ENCODE measurements at regions of chr2 and their contacts with region 1.

Region 1: DNA sequence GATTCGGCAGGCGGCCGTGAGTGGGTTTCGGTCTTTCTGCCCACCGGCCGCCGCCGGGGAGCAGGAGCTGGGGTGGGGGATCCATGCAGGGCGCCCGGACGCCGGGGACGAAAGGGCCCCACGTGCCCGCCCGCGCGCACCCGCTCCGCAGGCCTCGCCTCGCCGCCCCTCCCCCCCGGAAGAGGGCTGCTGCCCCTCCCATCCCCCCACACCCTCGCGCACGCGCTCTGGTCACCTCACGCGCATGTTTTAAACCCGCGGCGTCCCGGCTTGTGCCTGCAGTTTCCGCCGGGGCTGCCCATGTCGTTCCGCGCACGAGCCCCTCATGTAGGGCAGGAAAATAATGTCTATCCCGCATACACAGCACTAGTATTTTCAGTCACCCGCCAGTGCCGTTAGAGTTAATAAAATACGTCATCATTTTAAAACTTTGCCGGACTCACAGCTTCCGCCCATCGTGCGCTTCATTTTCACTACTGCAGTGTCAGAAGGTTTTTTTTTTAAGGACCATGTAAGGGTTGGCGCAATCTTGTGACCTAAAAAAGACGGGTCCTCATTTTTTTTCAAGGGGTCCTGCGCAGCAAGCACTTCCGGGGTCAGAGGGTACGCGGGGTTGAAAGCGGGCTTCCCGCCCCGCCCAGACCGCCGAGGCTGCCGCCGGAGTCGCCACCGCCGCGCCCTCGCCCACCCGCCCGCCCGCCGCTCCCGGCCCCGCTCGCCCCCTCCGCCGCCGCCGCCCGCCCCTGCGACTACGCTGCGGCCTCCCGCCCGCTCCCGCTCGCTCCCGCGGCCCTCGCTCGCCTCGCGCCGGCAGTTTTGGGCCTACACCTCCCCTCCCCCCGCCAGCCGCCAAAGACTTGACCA is at the start of gene PCBP1:
- DNase-seq: peak; percentile 95 to 97 (median 96)
- H3K4me3 ChIP-seq: peak within 1 kb of the TSS; percentile 69 to 99 (median 93)
- H3K27ac ChIP-seq: peak within 1 kb of the TSS; percentile 100
- H3K4me1 ChIP-seq: peaks cover 35 to 70% (median 50%) of the 10 kb centered on the region in 4 experiments
- H3K27me3 ChIP-seq: no peaks in the 10 kb centered on the region

Region 2: DNA sequence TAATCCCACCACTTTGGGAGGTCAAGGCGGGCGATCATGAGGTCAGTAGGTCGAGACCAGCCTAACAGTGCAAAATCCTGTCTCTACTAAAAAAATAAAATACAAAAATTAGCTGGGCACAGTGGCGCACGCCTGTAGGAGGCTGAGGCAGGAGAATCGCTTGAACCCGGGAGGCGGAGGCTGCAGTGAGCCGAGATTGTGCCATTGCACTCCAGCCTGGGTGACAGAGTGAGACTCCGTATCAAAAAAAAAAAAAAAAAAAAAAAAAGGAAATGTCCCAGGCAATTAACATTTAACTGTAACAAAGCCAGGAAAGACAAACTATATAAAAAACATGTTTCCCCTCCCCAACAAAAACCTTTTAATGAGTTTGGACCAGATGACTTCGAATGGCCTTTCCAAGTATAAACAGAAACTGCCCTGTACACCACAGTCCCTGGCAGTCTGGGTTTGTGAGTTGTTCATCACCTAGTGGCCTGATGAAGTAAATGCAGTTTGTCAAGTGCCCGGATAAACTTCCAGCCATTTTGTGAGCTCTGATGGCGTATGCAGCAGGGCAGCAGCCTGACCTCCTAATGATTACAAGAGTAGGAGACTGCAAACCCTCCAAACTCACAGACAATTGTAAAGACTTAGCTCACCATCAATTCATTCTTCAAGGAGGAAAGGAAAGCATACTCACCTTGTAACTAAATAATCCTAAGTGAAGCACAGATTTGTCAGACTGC is 16.4 kb before region 1 on chr2:
- CTCF ChIA-PET with region 1: interaction called, 13 read pairs
- POLR2A ChIA-PET with region 1: no interaction called
- DNase-seq: peak; percentile 88 to 92 (median 92)
- H3K4me3 ChIP-seq: peak overlapping the region in 1 of 7 experiments; percentile 33
- H3K27ac ChIP-seq: no peak overlapping the region
- H3K4me1 ChIP-seq: peaks cover 4 to 19% (median 10%) of the 10 kb centered on the region in 4 experiments
- H3K27me3 ChIP-seq: no peaks in the 10 kb centered on the region

Region 3: GRCh38 chr2:70124983-70125480 is 38.0 kb after region 1 on chr2:
- CTCF ChIA-PET with region 1: interaction called, 19 read pairs
- POLR2A ChIA-PET with region 1: interaction called, 7 read pairs
- DNase-seq: peak; percentile 69 to 84 (median 80)
- H3K4me3 ChIP-seq: peak overlapping the region; percentile 30 to 83 (median 70)
- H3K27ac ChIP-seq: peak overlapping the region; percentile 85 to 92
- H3K4me1 ChIP-seq: peaks cover 29 to 80% (median 59%) of the 10 kb centered on the region in 4 experiments
- H3K27me3 ChIP-seq: no peaks in the 10 kb centered on the region

Region 4: DNA sequence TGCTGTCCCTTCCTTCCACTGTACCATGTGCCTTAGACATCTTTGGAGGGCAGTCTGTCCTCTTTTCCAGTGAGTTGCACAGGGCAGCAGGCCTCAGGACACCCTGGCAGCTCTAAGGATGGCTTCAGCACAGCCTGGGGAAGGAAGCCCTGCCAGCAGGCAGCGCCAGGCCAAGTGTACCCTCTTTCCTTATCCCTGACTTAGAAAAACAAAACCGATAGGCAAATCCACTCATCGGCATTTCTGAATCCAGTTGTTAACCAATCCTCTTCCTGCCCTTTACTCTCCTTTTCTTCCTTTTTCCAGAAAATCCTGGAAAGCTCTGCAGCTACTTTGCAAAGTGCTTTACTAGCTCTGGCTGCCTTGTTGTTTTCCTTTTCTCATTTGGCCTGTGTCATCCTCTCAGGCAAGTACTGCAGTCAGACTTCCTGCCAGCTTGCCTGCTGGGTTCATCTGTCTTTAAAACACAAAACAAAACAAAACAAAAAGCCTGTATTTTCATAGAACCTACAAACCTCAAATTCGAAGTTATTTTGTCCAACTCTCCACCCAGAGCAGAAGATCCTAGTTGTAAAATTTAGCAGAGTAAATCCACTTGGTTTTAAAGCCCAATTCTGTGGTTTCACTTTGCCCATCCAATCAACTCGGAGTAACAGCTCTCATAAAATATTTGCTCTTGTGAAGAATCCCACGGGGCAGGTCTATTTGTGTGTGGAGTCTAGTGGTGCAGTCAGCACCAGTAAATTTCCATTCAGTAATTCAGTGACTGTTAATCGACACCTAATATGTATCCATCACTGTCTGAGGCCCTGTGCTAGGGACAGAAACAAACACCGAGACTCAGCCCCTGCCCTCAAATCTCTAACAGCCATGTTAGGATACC is 45.4 kb after region 1 on chr2:
- CTCF ChIA-PET with region 1: interaction called, 18 read pairs
- POLR2A ChIA-PET with region 1: interaction called, 20 read pairs
- DNase-seq: peak in 2 of 3 donors; percentile 83 to 88
- H3K4me3 ChIP-seq: peak overlapping the region in 6 of 7 experiments; percentile 17 to 65 (median 44)
- H3K27ac ChIP-seq: peak overlapping the region; percentile 52 to 90
- H3K4me1 ChIP-seq: peaks cover 45 to 84% (median 72%) of the 10 kb centered on the region in 4 experiments
- H3K27me3 ChIP-seq: no peaks in the 10 kb centered on the region

Region 5: GRCh38 chr2:70137519-70137918 is 50.4 kb after region 1 on chr2:
- CTCF ChIA-PET with region 1: interaction called, 18 read pairs
- POLR2A ChIA-PET with region 1: interaction called, 20 read pairs
- DNase-seq: peak in 2 of 3 donors; percentile 76 to 77
- H3K4me3 ChIP-seq: no peak overlapping the region
- H3K27ac ChIP-seq: no peak overlapping the region
- H3K4me1 ChIP-seq: peaks cover 33 to 84% (median 68%) of the 10 kb centered on the region in 4 experiments
- H3K27me3 ChIP-seq: no peaks in the 10 kb centered on the region

Region 6: DNA sequence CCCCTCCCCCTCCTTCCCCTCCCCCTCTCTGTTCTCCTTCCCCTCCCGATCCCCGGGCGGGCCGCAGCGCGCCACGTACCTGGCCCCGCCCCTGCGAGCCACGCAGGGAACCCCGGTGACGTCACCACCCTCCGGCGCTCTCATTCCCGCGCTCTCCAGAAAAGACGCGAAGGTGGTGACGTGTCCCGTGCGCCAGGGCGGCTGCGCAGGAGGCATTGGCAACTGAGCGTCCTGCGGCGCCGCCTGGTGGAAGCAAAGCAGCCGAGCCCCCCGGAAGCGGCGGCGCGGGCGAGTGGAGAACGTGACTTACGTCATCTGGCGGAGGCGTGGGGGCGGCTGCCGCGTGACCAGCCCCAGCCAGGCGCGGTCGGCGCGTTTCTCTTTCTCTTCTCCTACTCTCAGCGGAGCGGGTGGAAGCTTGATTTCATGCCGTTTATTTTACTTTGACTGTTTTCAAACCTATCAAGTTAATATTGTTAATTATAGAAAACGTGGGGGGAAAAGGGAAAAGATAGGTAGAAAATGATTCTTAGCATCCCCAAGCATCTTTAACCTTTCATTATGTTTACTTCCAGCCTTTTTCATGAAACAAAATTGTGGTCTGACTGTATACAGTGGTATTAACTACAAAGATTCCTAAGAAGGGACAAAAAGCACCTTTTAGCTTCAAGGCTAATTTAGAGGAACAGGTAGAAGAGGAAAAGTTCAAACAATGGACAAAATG is 55.7 kb after region 1 on chr2:
- CTCF ChIA-PET with region 1: interaction called, 14 read pairs
- POLR2A ChIA-PET with region 1: interaction called, 12 read pairs
- DNase-seq: peak; percentile 99 to 100 (median 99)
- H3K4me3 ChIP-seq: peak overlapping the region in 6 of 7 experiments; percentile 49 to 79 (median 68)
- H3K27ac ChIP-seq: peak overlapping the region; percentile 85 to 97
- H3K4me1 ChIP-seq: peaks cover 10 to 41% (median 26%) of the 10 kb centered on the region in 4 experiments
- H3K27me3 ChIP-seq: no peaks in the 10 kb centered on the region

Measured in common myeloid progenitor, CD34-positive (primary cell).